Activated CD8-positive, alpha-beta T cell treated with anti-CD3 and anti-CD28 coated beads, Interleukin-2, amount 10 ng/mL, durations not matched to agents 7 days and 5 days (primary cell): ENCODE measurements at regions of chr18 and their contacts with region 1.

Region 1: GRCh38 chr18:3447895-3448837 is 1.8 kb upstream of the TGIF1 start:
- DNase-seq: peak; percentile 90
- ATAC-seq: peak; percentile 72
- H3K4me3 Mint-ChIP-seq: peak overlapping the region; percentile 95
- H3K27ac Mint-ChIP-seq: peak overlapping the region; percentile 93
- H3K4me1 Mint-ChIP-seq: peaks cover 25% of the 10 kb centered on the region
- H3K27me3 Mint-ChIP-seq: peaks cover under 1% of the 10 kb centered on the region

Region 2: DNA sequence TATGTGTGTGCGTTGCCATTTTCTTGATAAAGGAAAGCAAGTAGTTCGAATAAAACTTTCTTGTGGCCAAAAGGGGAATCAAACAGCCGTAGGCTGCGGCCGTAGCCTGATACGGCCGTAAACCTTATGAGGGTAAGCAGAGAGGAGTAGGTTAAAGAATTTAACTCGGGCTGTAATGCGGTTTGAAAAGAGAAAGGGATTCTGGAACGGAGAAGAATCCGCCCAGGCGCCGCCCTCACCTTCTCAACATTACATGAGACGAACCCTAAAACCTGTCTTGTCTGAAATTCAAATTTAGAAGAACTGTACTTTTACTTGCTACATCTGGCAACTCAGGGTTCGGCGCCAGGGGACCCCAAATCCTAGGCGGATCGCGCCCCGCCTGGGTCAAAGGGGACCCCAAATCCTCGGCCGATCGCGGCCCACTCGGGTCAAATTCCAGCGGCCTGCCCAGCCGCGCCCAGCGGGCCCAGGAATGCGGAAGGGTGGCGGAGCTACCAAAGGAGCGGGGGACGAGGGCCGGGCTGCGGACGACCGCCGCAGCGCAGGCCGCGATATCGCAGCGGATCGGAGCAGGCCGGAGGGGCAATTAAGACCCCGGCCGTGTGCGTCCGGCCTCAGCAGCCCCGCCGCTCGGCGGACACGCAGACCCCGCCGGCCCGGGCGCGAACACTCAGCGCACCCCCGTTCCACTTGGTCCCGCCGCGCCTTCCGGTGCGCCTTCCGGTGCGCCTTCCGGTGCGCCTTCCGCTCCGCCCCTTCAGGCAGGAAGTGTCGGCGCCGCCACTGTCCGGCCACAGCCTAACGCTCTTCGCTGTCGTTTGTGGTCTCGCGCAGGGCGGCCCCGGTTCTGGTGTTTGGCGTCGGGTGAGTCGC is 186.6 kb before region 1 on chr18 and contains the start of gene MYL12B:
- CTCF ChIA-PET with region 1: interaction called, 5 read pairs
- POLR2A ChIA-PET with region 1: interaction called, 15 read pairs
- DNase-seq: peak; percentile 87
- ATAC-seq: peak; percentile 74
- H3K4me3 Mint-ChIP-seq: peak within 1 kb of the TSS; percentile 90
- H3K27ac Mint-ChIP-seq: peak within 1 kb of the TSS; percentile 100
- H3K4me1 Mint-ChIP-seq: peaks cover 78% of the 10 kb centered on the region
- H3K27me3 Mint-ChIP-seq: no peaks in the 10 kb centered on the region
- total RNA-seq, gene MYL12B: 402 to 404 TPM

Region 3: GRCh38 chr18:3424280-3424890 is 23.8 kb before region 1 on chr18:
- CTCF ChIA-PET with region 1: no interaction called
- POLR2A ChIA-PET with region 1: no interaction called
- DNase-seq: no peak
- ATAC-seq: no peak
- H3K4me3 Mint-ChIP-seq: no peak overlapping the region
- H3K27ac Mint-ChIP-seq: no peak overlapping the region
- H3K4me1 Mint-ChIP-seq: no peaks in the 10 kb centered on the region
- H3K27me3 Mint-ChIP-seq: no peaks in the 10 kb centered on the region

Region 4: GRCh38 chr18:3466045-3466444 is 17.9 kb after region 1 on chr18:
- CTCF ChIA-PET with region 1: interaction called, 19 read pairs
- POLR2A ChIA-PET with region 1: interaction called, 5 read pairs
- DNase-seq: no peak
- ATAC-seq: no peak
- H3K4me3 Mint-ChIP-seq: no peak overlapping the region
- H3K27ac Mint-ChIP-seq: no peak overlapping the region
- H3K4me1 Mint-ChIP-seq: peaks cover 10% of the 10 kb centered on the region
- H3K27me3 Mint-ChIP-seq: no peaks in the 10 kb centered on the region

Region 5: DNA sequence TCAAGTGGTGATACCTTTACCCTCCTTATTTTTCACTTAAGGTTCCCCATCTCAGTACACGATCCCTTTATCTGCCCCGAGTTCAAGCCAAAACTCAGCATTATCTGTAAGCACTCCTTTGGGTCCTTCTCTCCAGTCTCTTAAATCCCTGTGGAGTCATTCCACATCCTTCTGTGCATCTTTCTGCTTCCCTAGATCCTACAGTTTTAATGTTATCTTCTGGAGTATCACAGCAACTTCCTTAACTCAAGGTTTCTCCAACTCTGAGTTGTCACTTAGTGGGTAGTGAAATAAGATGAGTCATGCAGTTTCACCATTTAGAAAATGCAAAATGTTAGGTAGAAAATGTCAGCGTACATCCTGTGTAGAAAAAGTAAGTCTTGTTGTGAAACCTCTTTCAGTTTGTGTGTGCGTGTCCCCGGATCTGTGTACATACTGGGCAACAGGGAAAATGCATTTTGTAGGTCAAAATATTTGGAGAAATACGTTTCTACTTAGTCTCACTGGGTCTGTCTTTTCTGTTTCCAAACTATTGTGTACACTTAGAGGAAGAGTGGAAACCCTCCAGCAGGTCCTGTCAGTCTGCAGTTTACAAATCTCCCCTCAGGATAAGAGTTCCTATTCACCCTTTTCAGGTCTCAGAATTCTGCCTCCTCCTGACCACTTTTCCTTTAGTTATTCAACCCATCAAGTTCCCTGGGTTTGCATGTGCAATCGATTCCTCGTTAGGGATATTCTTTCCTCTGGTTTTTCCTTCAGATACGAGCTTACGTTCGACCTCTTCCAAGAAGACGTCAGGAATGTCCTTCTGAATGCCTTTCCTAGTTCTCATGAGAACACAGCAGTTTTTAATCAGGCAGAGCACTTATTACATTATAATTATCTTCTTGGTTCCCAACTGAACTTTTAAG is 156.6 kb after region 1 on chr18:
- CTCF ChIA-PET with region 1: interaction called, 4 read pairs
- POLR2A ChIA-PET with region 1: interaction called, 18 read pairs
- DNase-seq: peak; percentile 52
- ATAC-seq: peak; percentile 71
- H3K4me3 Mint-ChIP-seq: no peak overlapping the region
- H3K27ac Mint-ChIP-seq: no peak overlapping the region
- H3K4me1 Mint-ChIP-seq: peaks cover 27% of the 10 kb centered on the region
- H3K27me3 Mint-ChIP-seq: no peaks in the 10 kb centered on the region